A673 (cell line): ENCODE measurements at regions of chr5 and their contacts with region 1.

Region 1: GRCh38 chr5:431001-431710 is 11.8 kb upstream of the EXOC3 start:
- DNase-seq: peak; percentile 62
- H3K4me3 ChIP-seq: no peak overlapping the region
- H3K27ac ChIP-seq: no peak overlapping the region
- H3K4me1 ChIP-seq: no peaks in the 10 kb centered on the region
- H3K27me3 ChIP-seq: no peaks in the 10 kb centered on the region
- CTCF ChIP-seq: peak; percentile 92

Region 2: DNA sequence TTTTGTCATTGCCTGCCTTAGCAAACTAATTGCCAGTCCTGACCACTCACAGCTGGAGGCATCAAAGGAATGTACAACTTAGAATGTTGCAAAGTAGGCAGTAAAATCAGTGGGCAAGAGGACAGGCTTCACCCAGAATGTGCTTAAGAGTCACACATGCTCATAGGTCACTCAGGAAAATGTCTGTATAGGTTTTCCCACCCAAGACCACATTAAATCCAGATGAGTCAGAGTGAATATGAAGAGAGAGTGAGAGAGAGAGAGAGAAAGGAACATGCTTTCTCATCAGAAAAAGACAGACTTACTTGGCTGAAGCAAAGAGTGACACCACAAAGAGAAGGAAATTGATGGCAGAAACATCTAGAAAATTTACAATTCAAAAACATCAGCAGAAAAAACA is 301.3 kb before region 1 on chr5:
- CTCF ChIA-PET with region 1: no interaction called
- POLR2A ChIA-PET with region 1: no interaction called
- intact Hi-C with region 1: no loop called
- DNase-seq: no peak
- H3K4me3 ChIP-seq: no peak overlapping the region
- H3K27ac ChIP-seq: no peak overlapping the region
- H3K4me1 ChIP-seq: no peaks in the 10 kb centered on the region
- H3K27me3 ChIP-seq: no peaks in the 10 kb centered on the region
- CTCF ChIP-seq: no peak

Region 3: DNA sequence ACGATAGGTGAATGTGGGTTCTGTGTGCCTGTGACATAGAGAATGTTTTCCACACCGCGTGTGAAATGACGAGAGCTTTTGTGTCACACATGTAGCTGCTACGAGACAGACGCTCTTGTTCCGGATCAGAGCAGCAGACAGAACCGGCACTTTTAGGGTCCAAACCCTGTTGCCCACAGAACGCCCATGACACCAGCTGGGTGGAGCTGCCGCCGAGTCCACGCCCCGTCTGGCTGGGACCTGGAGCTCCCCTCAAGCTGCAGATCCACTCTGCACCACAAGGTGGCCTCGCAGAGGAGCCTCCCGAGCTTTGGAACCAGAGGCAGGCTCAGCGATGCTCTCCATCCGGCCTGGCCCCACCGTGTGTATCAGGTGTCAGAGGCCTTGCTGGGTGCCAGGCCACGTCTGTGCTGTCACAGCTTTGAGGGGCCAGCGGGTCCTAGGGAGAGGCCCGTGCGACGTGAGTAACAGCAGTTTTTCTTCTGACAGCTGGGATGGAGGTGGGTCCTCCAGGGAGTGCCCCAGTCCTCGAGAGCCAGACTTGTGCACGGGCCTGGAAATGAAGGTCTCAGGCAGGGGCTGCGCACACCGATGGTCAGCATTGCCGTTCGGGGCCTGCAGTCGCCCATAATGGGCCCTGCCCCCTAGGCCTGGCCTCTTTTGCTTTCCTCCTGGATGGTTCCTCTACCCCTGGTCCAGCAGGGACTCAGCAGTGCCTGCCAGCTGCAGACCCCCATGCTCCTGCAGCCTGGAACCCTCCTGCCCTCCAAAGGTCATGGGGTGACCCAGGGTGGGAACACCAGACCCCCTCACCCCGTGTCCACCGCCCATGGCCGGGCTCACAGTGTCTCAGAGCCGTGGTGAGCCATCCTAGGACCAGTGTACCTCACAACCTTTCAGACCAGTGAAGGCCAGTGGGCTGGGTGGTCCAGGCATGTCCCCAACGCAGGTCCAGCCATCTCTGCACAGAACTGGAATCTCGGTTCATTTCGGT is 242.4 kb before region 1 on chr5:
- CTCF ChIA-PET with region 1: interaction called, 5 read pairs
- POLR2A ChIA-PET with region 1: no interaction called
- intact Hi-C with region 1: loop called (anchors 2 kb)
- DNase-seq: peak; percentile 90
- H3K4me3 ChIP-seq: no peak overlapping the region
- H3K27ac ChIP-seq: no peak overlapping the region
- H3K4me1 ChIP-seq: peaks cover 3% of the 10 kb centered on the region
- H3K27me3 ChIP-seq: no peaks in the 10 kb centered on the region
- CTCF ChIP-seq: peak; percentile 96

Region 4: DNA sequence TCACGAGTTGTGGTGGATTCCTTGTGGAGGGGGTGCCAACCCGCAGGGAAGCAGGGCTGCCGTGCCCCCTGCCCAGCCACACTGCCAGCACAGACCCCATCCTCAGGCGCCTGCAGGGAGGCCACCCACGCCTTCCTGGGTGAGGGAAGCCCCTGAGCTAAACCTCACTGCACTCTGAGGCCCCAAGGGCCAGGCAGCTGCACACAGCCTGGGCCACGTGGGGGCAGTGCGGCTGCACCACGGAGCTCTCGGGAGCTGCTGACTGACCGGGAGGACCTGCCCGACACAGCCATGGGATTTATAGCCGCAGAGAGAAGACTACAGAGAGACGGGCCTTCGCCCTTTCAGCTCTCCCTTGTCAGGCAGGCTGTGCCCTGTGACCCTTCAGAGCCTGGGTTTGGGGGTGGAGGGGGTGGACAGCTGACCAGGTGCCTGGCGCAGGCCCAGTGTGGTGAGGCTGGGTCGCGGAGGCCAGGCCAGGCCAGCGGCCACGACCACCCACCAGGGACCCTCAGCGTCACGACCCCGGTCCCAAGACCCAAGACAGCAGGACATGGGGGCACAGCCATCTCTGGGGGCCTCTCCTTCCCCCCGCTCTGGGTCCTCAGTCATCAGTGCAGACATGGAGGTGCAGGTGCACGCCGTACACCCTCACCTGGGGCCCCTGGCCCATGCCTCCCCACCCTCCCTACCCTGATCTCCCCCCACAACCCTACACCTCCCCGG is 113.9 kb before region 1 on chr5:
- CTCF ChIA-PET with region 1: interaction called, 7 read pairs
- POLR2A ChIA-PET with region 1: no interaction called
- intact Hi-C with region 1: loop called (anchors 5 kb)
- DNase-seq: peak; percentile 78
- H3K4me3 ChIP-seq: no peak overlapping the region
- H3K27ac ChIP-seq: no peak overlapping the region
- H3K4me1 ChIP-seq: peaks cover 16% of the 10 kb centered on the region
- H3K27me3 ChIP-seq: peaks cover 29% of the 10 kb centered on the region
- CTCF ChIP-seq: peak; percentile 78